Sigmoid colon (tissue), 7 donors: ENCODE measurements at regions of chr16 and their contacts with region 1.

Region 1: GRCh38 chr16:69535123-69536050 is 30.4 kb upstream of the NFAT5 start:
- DNase-seq: no peak
- H3K4me3 ChIP-seq: no peak overlapping the region
- H3K27ac ChIP-seq: no peak overlapping the region
- H3K4me1 ChIP-seq: peaks cover 0 to 7% (median 3%) of the 10 kb centered on the region in 4 donors
- H3K27me3 ChIP-seq: no peaks in the 10 kb centered on the region
- CTCF ChIP-seq: no peak
- EP300 ChIP-seq: no peak
- POLR2A ChIP-seq: no peak

Region 2: DNA sequence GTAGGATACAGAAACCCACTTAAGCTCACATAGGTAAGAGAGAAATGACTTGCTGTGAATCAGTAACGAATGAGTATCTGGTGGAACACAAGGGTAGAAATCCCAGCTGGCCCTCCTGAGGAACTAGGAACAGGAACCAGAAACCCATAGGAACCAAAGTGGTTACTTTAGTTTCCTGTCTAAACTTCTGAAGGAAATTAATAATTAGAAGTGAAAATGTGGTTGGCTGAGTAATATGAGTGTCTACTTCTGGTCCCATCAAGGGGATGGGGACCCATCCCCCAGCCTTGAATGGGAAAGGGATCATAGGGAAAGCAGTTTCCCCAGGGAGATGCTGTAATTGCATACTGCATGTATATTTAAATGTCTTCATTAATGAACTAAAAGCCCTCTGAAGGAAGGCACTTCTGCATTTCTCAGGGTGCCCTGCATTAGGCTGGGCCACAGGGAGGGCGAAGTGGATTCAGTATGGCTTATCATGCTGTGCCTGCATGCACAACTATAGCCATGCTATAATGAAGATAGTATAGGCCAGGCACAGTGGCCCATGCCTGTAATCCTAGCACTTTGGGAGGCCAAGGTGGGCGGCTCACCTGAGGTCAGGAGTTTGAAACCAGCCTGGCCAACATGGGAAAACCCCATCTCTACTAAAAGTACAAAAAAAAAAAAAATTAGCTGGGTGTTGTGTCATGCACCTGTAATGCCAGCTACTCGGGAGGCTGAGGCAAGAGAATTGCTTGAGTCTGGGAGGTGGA is 65.4 kb before region 1 on chr16:
- intact Hi-C with region 1: loop called (anchors 10 kb)
- DNase-seq: no peak
- H3K4me3 ChIP-seq: no peak overlapping the region
- H3K27ac ChIP-seq: no peak overlapping the region
- H3K4me1 ChIP-seq: no peaks in the 10 kb centered on the region
- H3K27me3 ChIP-seq: no peaks in the 10 kb centered on the region
- CTCF ChIP-seq: no peak
- EP300 ChIP-seq: no peak
- POLR2A ChIP-seq: no peak

Region 3: DNA sequence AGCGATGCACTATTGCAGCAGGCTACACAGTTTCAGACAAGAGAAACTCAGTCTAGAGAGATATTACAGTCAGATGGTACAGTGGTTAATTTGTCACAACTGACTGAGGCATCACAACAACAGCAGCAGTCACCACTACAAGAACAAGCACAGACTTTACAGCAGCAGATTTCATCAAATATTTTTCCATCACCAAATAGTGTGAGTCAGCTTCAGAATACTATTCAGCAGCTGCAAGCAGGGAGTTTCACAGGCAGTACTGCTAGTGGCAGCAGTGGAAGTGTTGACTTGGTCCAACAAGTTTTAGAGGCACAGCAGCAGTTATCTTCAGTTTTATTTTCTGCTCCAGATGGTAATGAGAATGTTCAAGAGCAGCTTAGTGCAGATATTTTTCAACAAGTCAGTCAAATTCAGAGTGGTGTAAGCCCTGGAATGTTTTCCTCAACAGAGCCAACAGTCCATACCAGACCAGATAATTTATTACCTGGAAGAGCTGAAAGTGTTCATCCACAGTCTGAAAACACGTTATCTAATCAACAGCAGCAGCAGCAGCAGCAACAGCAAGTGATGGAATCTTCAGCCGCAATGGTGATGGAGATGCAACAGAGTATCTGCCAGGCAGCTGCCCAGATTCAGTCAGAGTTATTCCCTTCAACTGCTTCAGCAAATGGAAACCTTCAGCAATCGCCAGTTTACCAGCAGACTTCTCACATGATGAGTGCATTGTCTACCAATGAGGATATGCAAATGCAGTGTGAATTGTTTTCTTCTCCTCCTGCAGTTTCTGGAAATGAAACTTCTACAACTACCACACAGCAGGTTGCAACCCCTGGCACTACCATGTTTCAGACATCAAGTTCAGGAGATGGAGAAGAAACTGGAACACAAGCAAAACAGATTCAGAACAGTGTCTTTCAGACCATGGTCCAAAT is 156.9 kb after region 1 on chr16:
- intact Hi-C with region 1: no loop called
- DNase-seq: no peak
- H3K4me3 ChIP-seq: no peak overlapping the region
- H3K27ac ChIP-seq: peak overlapping the region in 2 of 4 donors; percentile 24 to 46
- H3K4me1 ChIP-seq: peaks cover 0 to 14% (median 7%) of the 10 kb centered on the region in 4 donors
- H3K27me3 ChIP-seq: no peaks in the 10 kb centered on the region
- CTCF ChIP-seq: no peak
- EP300 ChIP-seq: no peak
- POLR2A ChIP-seq: no peak